Activated naive CD4-positive, alpha-beta T cell treated with anti-CD3 and anti-CD28 coated beads for 36 hours (primary cell): ENCODE measurements at regions of chr2 and their contacts with region 1.

Region 1: GRCh38 chr2:105744091-105744908 is 412 bp upstream of the NCK2 start:
- DNase-seq: peak; percentile 63
- H3K4me3 Mint-ChIP-seq: peak overlapping the region; percentile 67
- H3K27ac Mint-ChIP-seq: peak overlapping the region; percentile 87
- H3K4me1 Mint-ChIP-seq: peaks cover 70% of the 10 kb centered on the region
- H3K27me3 Mint-ChIP-seq: no peaks in the 10 kb centered on the region

Region 2: GRCh38 chr2:105299295-105299694 is 445.0 kb before region 1 on chr2:
- CTCF ChIA-PET with region 1: no interaction called
- intact Hi-C with region 1: no loop called
- DNase-seq: no peak
- H3K4me3 Mint-ChIP-seq: no peak overlapping the region
- H3K27ac Mint-ChIP-seq: no peak overlapping the region
- H3K4me1 Mint-ChIP-seq: peaks cover 19% of the 10 kb centered on the region
- H3K27me3 Mint-ChIP-seq: no peaks in the 10 kb centered on the region

Region 3: DNA sequence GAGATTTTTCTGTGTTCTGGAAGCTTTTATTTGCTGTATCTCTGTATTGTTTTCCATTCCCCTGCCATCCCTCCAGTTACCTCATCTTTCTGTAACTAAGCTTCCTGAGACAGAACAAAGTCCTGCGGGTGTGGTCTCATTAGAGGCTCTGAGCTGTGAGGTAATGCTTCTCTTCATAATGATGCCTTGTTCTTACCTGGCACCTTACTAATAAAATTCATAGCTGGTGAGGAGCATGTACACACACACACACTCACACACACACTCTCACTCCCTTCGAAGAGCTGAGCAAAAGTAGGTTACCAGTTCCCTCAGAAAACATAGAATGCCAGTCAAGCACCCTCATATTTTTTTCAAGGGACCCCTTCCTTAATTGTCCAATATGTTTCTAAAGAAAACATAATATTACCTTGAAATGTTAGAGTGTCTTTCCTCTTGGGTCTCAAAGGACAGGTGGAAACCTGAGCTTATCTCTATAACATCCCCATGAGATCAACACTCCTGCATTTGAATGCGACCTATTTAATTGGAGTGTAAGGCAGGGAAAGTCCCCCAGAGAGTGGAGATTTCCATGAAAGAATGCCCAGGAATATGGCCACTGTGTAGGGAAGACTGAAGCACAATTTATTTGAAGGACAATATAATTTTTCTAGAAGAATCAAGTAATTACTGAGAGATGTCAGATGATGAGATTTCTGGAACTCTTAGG is 161.2 kb before region 1 on chr2:
- CTCF ChIA-PET with region 1: interaction called, 4 read pairs
- intact Hi-C with region 1: loop called (anchors 1 kb)
- DNase-seq: peak; percentile 12
- H3K4me3 Mint-ChIP-seq: no peak overlapping the region
- H3K27ac Mint-ChIP-seq: no peak overlapping the region
- H3K4me1 Mint-ChIP-seq: peaks cover 33% of the 10 kb centered on the region
- H3K27me3 Mint-ChIP-seq: no peaks in the 10 kb centered on the region

Region 4: DNA sequence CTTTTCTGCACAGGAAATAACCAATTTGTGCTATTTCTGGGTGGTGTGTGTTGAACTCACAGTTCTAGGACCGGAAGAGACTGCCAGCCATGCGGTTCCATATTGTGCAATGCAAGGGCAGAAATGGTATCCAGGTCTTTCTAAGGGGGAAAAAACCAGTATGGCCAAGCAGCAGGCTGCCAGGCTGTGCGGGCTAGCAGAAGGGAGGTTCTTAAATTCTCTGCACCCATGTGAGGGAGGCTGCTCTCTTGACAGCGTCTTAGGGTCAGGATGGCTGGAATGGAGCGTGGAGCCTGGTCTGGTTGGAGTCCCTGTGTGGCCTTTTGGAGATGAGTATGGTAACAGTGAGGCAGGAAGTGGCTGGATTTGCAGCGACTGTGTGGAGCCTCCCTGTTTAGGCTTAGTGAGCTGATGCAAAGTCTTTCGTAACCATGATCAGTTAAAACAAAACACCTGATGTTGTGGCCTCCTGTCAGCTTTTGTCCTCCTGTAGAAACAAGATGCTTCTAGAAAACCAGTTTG is 53.1 kb after region 1 on chr2:
- CTCF ChIA-PET with region 1: interaction called, 4 read pairs
- intact Hi-C with region 1: loop called (anchors 1 kb)
- DNase-seq: peak; percentile 66
- H3K4me3 Mint-ChIP-seq: peak overlapping the region; percentile 32
- H3K27ac Mint-ChIP-seq: peak overlapping the region; percentile 92
- H3K4me1 Mint-ChIP-seq: peaks cover 93% of the 10 kb centered on the region
- H3K27me3 Mint-ChIP-seq: no peaks in the 10 kb centered on the region

Region 5: GRCh38 chr2:105866216-105867185 is 122.2 kb after region 1 on chr2:
- CTCF ChIA-PET with region 1: no interaction called
- intact Hi-C with region 1: no loop called
- DNase-seq: no peak
- H3K4me3 Mint-ChIP-seq: no peak overlapping the region
- H3K27ac Mint-ChIP-seq: no peak overlapping the region
- H3K4me1 Mint-ChIP-seq: peaks cover 88% of the 10 kb centered on the region
- H3K27me3 Mint-ChIP-seq: no peaks in the 10 kb centered on the region

Region 6: DNA sequence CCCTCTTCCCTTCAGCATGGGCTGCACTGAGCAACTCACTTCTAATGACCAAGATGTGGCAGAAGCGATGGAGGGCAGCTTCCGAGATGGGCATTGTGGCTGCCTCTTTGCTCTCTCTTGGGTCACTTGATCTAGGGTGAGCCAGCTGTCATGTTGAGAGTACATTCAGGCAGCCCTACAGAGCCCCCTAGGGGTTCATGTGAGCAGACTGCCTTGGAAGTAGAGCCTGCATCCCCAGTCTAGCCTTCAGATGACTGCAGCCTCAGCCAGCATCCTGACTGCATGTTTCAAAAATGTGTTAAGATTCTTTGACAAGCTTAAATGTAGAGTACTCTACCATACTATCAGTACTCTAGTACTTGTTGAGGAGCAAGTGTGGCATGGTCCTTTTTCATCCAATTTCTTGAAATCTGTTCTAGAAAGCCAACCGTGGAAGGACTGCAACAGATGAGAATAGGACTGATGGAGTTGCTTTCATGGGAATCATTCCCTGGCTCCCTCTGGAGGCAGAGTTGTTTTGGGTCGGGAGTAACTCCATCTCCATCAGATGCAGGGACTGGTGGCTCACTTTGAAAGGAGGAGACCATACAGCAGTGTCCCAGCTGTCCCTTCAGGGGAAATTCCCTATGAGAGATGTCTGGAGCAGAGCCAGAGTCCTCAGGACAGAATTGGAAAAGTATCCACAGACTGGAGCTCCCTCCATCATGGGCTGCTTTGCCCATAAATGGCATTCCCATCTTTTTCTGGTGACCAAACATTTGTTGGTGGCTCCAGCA is 144.5 kb after region 1 on chr2:
- CTCF ChIA-PET with region 1: no interaction called
- intact Hi-C with region 1: loop called (anchors 2 kb)
- DNase-seq: peak; percentile 69
- H3K4me3 Mint-ChIP-seq: no peak overlapping the region
- H3K27ac Mint-ChIP-seq: peak overlapping the region; percentile 15
- H3K4me1 Mint-ChIP-seq: peaks cover 61% of the 10 kb centered on the region
- H3K27me3 Mint-ChIP-seq: no peaks in the 10 kb centered on the region

Region 7: GRCh38 chr2:106193977-106194778 is 449.9 kb after region 1 on chr2 and contains the start of gene UXS1:
- CTCF ChIA-PET with region 1: no interaction called
- intact Hi-C with region 1: loop called (anchors 2 kb)
- DNase-seq: peak; percentile 98
- H3K4me3 Mint-ChIP-seq: peak within 1 kb of the TSS; percentile 86
- H3K27ac Mint-ChIP-seq: peak within 1 kb of the TSS; percentile 83
- H3K4me1 Mint-ChIP-seq: peaks cover 44% of the 10 kb centered on the region
- H3K27me3 Mint-ChIP-seq: no peaks in the 10 kb centered on the region
- total RNA-seq, gene UXS1: 36.2 to 41.9 TPM